ENCODE measurements at regions of chr21 and their contacts with region 1.

Region 1: DNA sequence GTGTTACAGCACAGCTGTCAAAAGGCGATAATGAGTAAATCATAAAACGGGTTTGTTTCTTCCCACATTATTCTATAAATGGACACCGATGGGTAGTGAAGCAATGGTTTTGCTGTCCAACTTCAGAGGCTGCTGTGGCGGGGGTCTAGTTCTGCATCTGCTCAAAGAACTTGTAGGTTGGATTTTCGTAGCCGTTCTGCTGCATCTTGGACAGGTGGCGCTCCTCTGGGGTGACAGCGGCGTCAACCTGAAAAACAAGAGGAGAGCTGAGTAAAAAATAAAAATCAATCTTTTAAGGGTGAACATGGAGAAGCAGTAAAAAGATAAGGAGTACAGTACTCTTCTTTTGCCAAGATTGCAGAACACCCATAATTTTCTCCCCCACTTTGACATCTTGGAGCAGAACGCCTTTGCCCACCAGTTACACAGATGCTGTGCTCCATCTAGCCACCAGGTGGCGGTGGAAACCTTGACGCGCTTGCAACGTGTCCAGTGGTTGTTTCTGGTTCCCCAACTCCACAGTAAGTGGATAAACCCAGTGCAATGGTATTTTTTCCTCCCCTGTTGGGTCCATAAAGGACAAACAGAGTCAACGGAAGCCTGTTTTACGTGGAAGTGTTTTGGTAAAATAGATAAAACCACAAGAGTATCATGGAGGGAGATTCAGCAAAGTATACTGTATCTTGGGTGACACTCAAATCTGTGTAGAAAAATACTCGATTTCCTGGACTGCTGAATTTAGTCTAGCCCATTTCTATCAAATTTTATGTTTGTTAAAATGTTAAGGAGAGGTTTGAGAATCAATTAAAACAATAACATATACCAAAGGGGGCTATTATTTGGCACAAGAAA is 147.0 kb downstream of the GABPA start:
- DNase-seq: peak; percentile 71
- H3K4me3 Mint-ChIP-seq: no peak overlapping the region
- H3K27ac Mint-ChIP-seq: no peak overlapping the region
- H3K4me1 Mint-ChIP-seq: no peaks in the 10 kb centered on the region
- H3K27me3 Mint-ChIP-seq: no peaks in the 10 kb centered on the region

Region 2: GRCh38 chr21:25561668-25562641 is 319.8 kb before region 1 on chr21:
- CTCF ChIA-PET with region 1: no interaction called
- POLR2A ChIA-PET with region 1: no interaction called
- intact Hi-C with region 1: no loop called
- DNase-seq: peak; percentile 89
- H3K4me3 Mint-ChIP-seq: peak overlapping the region; percentile 80
- H3K27ac Mint-ChIP-seq: peak overlapping the region; percentile 94
- H3K4me1 Mint-ChIP-seq: peaks cover 52% of the 10 kb centered on the region
- H3K27me3 Mint-ChIP-seq: no peaks in the 10 kb centered on the region

Region 3: DNA sequence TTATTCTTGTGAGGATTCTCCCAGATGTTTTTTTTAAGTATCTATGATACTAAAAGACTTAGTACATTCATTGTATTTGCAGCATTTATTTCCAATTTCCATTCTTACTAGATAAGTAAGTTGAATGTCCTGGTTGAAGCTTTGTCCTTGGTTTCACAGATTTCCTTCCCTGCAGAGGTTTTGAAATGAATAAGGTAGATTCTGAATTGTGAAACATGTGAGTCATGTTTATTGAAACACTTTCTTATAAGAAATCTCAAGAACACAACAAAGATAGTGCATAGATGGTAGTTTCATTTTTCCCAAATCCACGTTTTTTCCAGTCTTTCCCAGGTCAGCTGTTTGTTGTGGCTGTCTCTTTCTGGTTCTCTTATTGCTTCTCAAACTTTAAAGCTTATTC is 122.2 kb before region 1 on chr21:
- CTCF ChIA-PET with region 1: no interaction called
- POLR2A ChIA-PET with region 1: no interaction called
- intact Hi-C with region 1: no loop called
- DNase-seq: no peak
- H3K4me3 Mint-ChIP-seq: no peak overlapping the region
- H3K27ac Mint-ChIP-seq: peak overlapping the region; percentile 50
- H3K4me1 Mint-ChIP-seq: peaks cover 29% of the 10 kb centered on the region
- H3K27me3 Mint-ChIP-seq: no peaks in the 10 kb centered on the region

Region 4: DNA sequence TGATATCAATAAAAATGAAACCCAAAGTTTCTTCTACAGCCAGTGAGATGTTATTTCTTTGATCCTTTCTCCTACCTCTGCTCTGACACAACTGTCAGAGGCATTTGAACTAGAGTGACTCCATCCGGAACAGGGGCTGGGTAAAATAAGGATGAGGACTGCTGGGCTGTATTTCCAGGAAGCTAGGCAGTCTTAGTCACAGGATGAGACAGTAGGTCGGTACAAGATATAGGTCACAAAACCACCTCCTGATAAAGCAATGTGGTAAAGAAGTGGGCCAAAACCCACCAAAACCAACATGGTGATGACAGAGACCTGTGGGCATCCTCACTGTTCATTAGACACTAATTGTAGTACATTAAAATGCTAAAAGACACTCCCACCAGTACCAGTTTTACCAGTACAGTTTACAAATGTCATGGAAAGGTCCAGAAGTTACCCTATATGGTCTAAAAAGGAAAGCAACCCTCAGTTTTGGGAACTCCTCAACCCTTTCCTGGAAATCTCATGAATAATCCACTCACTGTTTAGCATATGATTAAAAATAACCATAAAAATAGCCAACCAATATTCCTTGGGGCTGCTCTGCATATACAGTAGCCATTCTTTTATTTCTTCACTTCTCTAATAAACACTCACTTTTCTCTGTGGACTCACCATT is 50.3 kb before region 1 on chr21:
- CTCF ChIA-PET with region 1: no interaction called
- POLR2A ChIA-PET with region 1: no interaction called
- intact Hi-C with region 1: no loop called
- DNase-seq: peak; percentile 24
- H3K4me3 Mint-ChIP-seq: no peak overlapping the region
- H3K27ac Mint-ChIP-seq: no peak overlapping the region
- H3K4me1 Mint-ChIP-seq: peaks cover 3% of the 10 kb centered on the region
- H3K27me3 Mint-ChIP-seq: peaks cover 11% of the 10 kb centered on the region

Region 5: GRCh38 chr21:26715878-26716506 is 834.2 kb after region 1 on chr21:
- CTCF ChIA-PET with region 1: interaction called, 6 read pairs
- POLR2A ChIA-PET with region 1: no interaction called
- intact Hi-C with region 1: loop called (anchors 1 kb)
- DNase-seq: peak; percentile 17
- H3K4me3 Mint-ChIP-seq: no peak overlapping the region
- H3K27ac Mint-ChIP-seq: no peak overlapping the region
- H3K4me1 Mint-ChIP-seq: no peaks in the 10 kb centered on the region
- H3K27me3 Mint-ChIP-seq: peaks cover 2% of the 10 kb centered on the region